GM18951 (cell line): ENCODE measurements at regions of chr2 and their contacts with region 1.

Region 1: GRCh38 chr2:218406209-218406948 is 6.7 kb downstream of the CTDSP1 start:
- POLR2A ChIP-seq: peak; percentile 47

Region 2: GRCh38 chr2:218832520-218832919 is 426.1 kb after region 1 on chr2:
- in situ Hi-C with region 1: loop called (anchors 25 kb)
- POLR2A ChIP-seq: no peak